Posterior vena cava (tissue), 2 donors: ENCODE measurements at regions of chr15 and their contacts with region 1.

Region 1: DNA sequence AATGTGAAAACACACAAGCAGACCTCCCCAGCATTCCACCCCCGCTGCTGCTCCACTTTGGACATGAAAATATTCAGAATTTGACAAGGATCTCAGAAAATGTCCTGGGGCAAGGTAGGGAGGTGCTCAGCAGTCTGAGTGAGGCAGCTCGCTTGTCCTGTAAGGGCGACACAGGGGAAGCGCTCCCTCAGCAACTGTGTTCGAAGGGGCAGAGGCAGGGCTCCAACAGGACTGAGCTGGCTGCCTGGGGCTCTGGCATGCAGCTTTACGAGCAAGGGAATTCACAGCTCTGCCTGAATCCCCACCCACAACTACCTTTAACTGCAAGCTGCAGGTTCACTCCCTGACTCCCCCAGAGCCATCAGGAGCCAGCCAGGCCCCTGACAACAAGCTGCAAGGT is 287.0 kb upstream of the LYSMD4 start:
- DNase-seq: no peak

Region 2: DNA sequence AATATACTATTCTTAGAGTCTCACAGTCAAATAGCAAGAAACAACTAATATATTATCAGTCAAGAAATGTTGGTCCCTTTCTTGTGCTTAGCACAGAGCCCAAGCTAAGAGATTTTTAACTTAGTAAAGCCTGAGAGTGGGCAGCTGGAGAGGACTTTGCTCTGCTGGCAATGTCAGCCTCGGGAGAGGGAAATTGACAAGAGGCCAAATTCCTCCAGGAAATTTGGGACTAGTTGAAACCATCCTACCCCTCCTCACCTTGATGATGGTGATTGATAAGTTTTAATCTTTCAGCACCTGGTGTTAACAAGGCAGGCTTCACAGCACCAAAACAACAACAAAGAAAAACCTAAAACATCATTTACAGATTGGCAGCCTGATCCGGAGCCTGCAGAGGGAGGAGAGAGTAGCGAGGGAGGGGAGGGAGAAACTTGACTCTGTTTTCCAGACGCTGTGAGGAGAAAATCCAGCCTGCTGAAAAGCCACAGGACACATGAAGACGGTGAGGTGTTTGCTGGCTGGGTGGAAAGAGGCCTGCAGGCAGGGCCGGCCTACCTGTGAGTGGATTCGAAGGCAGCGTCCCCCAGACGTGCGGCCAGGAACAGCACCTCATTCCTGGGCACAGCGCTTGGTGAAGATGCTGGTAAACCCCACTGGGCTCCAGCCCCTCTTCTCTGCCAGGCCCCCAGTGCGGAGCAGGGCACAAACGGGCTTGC is 618.0 kb before region 1 on chr15:
- intact Hi-C with region 1: no loop called
- DNase-seq: no peak

Region 3: DNA sequence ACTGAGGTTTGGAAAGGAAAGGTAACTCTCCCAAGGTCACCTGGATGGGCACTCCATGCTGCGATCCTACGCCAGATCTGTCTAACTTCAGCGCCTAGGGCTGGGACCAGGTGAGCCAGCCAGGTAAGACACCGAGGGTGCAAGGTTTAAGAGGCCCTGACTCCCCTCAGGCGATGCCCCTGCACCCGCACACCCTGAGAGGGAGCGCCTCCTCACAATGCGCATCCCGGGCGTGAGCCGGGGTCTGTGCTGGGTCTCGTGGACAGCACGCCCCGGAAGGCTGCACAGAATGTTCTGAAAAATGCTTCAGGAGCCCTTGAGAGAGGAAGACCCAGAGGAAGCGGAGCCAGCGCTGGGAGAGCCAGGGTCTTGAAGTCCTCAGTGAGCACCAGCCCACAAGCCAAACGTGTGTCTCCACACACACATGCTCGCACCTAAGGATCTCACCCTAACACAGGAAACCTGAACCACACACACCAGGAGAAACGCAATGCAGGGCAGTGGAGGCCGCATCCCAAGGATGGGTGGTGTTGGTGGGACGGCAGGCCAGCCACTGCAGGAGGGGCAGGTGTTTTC is 179.6 kb after region 1 on chr15:
- intact Hi-C with region 1: loop called in 1 of 2 experiments (anchors 5 kb)
- DNase-seq: peak; percentile 72